ENCODE measurements at regions of chr1 and their contacts with region 1.

Region 1: DNA sequence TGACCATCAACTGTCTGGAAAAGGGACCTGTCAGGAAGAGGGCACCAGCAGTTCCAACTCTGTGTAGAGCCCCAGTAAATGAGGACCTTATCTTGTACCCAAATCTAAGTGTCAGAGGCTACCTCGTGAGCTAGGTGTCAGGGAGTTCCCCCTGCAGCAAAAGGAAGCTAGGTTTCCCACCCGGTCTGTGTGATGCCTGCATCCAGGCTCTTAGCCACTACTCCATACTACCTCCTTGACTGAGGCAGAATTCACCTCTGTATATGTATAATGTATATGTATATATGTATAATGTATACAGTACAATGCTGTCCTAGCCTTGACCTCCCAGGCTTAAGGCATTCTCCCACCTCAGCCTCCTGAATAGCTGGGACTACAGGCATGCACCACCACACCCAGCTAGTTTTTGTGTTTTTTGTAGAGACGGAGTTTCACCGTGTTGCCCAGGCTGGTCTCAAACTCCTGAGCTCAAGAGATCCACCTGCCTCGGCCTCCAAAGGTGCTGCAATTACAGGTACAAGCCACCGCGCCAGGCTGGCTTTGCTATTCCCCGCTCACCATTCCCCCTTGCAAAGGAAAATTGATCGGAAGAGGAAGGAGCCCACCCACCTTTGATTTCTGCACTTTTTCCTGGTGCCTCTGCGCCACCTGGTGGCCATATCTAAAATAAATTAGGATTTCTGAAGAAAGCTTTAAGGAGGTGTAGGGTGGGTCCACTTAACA is 15.7 kb upstream of the LUZP1 start:
- DNase-seq: no peak
- ATAC-seq: peak; percentile 71
- H3K4me3 ChIP-seq: peak overlapping the region; percentile 8 to 54; a peak in 3 of 4 replicates
- H3K27ac ChIP-seq: no peak overlapping the region
- H3K4me1 ChIP-seq: peaks cover 6% of the 10 kb centered on the region
- H3K27me3 ChIP-seq: no peaks in the 10 kb centered on the region
- CTCF ChIP-seq: peak; percentile 85

Region 2: GRCh38 chr1:23098463-23099170 is 85.8 kb before region 1 on chr1:
- CTCF ChIA-PET with region 1: interaction called, 49 read pairs
- POLR2A ChIA-PET with region 1: interaction called, 5 read pairs
- in situ Hi-C with region 1: loop called (anchors 25 kb)
- intact Hi-C with region 1: loop called (anchors 1 kb)
- DNase-seq: peak; percentile 80
- ATAC-seq: peak; percentile 76
- H3K4me3 ChIP-seq: no peak overlapping the region
- H3K27ac ChIP-seq: peak overlapping the region; percentile 40; the same call in 1 of the 2 replicates
- H3K4me1 ChIP-seq: peaks cover 46% of the 10 kb centered on the region
- H3K27me3 ChIP-seq: no peaks in the 10 kb centered on the region
- CTCF ChIP-seq: peak; percentile 93